ENCODE measurements at regions of chr2 and their contacts with region 1.

Region 1: DNA sequence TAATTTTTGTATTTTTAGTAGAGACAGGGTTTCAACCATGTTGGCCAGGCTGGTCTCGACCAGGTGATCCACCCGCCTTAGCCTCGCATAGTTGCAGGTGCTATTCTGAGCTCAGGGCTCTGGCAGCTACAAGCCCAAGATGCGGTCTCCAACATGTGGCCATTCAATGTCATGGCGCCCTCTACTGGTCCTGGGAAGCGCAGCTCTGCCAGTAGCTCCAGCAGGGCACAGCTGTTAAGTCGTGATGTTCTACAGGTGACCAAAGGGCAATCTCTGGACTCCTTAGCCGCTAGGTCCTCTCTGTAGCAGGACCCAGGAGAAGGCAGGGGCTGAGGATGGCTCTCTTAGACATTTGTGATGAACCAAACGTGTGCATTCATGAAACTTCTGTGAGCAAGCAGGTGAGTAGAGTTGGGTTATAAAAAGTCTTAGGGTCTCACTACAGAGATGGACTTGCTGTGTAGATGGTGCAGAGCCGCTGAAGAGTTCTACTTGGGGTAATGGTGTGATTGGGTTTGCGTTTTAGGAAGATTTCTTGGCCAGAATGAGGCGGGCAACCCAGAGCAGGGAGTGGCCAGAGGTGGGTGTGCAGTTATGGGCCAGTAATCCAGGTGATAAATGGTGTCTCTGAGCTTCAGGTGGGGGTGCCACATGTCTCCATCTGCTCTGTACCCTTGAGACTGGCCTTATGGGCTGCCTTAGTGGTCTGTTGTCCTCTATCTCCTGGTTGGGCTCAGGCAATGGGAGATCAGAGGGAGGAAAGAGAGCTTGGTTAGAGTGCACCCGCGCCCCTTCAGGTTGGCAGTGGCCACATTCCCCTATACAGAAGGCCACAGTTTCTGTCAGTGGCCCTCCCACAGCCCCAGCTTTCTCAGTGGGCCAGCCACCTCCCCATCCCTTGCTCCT is 31.0 kb downstream of the IL37 start:
- DNase-seq: peak; percentile 91
- H3K4me3 ChIP-seq: no peak overlapping the region
- H3K27ac ChIP-seq: no peak overlapping the region
- H3K4me1 ChIP-seq: no peaks in the 10 kb centered on the region
- H3K27me3 ChIP-seq: no peaks in the 10 kb centered on the region
- CTCF ChIP-seq: peak; percentile 82

Region 2: GRCh38 chr2:112606488-112606902 is 335.5 kb before region 1 on chr2:
- intact Hi-C with region 1: loop called (anchors 10 kb)
- DNase-seq: peak; percentile 72
- H3K4me3 ChIP-seq: no peak overlapping the region
- H3K27ac ChIP-seq: peak overlapping the region; percentile 27
- H3K4me1 ChIP-seq: no peaks in the 10 kb centered on the region
- H3K27me3 ChIP-seq: no peaks in the 10 kb centered on the region
- CTCF ChIP-seq: no peak

Region 3: DNA sequence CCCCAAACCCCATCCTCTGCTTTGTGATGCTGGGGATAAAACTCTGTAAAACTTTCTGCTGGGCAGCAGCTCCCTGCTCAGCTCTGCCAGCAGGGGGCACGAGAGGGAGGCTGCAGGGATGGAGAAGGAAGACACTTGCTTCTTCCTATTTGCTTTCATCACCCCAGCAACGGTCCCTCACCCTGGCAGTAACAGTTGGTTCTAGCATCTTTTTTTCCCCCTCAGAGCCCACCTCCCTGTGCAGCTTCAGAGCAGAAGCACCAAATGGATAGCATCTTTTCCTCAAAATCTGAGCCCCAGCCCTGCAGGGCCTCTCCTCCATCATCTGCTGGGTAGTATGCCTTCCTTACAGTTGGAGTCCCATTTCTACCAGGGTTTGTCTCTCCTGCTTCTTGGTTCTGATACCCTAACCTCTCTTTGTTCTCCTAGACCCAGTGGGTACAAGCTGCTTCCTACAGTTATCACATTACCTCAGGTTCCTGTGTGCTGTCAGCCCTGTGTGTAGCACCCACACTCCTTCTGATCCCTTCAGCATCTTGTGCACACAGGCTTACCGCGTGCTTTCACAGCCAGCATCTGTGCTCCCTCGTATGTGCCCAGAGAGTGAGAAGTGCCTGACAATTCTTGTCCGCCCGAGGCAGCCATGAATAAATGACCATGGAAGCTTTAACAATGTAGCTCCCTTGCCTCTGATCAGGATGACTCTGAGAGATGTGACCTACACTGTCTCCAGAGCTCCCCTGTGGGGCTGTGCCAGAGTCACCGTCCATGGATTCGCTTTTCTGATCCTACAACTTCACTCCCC is 192.0 kb before region 1 on chr2:
- intact Hi-C with region 1: loop called (anchors 2 kb)
- DNase-seq: peak; percentile 80
- H3K4me3 ChIP-seq: no peak overlapping the region
- H3K27ac ChIP-seq: no peak overlapping the region
- H3K4me1 ChIP-seq: no peaks in the 10 kb centered on the region
- H3K27me3 ChIP-seq: no peaks in the 10 kb centered on the region
- CTCF ChIP-seq: peak; percentile 90

Region 4: DNA sequence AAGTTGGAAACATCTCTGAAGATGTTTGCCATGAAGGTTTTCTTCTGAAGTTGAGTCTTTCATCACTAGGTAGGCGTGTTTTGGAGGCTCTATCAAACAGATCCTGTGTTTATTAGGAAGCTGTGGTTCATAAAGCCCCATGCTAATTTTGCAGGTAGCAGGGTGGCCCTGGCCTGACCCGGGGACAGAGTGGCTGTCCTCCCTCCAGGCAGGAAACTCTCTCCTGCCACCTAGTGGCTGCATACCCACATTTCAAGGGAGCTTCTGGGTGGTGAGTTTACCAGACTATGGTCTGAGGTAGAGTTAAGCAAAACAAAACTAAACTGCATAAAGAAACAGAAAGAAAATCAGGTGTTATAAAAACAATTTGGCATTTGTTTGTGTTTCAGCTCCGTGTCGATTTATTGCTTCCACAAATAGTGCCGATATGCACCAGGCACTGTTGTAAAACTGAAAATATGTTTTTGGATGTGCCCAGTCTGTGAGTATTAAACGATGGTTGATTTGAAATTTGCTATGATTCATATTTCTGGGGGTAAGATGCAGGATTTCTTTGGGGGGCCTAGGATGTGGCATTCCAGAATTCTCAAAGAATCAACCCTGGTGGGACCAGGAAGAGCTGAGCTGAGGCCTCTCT is 57.0 kb before region 1 on chr2:
- intact Hi-C with region 1: loop called (anchors 5 kb)
- DNase-seq: peak; percentile 86
- H3K4me3 ChIP-seq: no peak overlapping the region
- H3K27ac ChIP-seq: no peak overlapping the region
- H3K4me1 ChIP-seq: peaks cover under 1% of the 10 kb centered on the region
- H3K27me3 ChIP-seq: no peaks in the 10 kb centered on the region
- CTCF ChIP-seq: peak; percentile 97

Measured in colonic mucosa (tissue), 4 donors.